Heart left ventricle (tissue), 16 donors: ENCODE measurements at regions of chr15 and their contacts with region 1.

Region 1: DNA sequence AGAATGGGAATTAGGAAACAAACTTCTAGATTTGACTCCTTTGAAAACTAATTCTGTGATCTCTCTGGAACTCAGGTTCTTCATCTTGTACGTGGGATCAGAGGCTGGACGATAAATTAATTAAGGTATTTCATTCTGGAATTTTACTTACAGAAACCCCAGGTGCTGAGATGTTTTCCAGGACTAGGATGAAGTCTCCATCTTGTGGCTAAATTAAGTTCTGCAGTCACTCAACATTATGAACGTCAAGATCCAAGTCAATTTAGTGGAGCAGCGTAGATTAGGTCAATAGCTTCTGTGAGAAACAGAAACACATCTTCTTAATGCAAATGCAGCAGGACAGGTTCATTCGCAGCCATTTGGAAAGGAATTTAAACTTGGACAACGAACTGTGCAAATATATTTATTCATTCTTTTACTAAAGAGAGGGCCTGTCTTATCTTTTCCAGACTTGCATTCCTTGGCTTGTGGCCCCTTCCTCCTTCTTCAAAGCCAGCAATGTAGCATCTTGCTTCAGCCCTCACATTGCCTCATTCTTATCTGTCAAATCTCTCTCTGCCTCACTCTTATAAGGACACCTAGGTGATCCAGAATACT is 26.7 kb upstream of the TMC3 start:
- DNase-seq: no peak
- ATAC-seq: no peak
- H3K4me3 ChIP-seq: no peak overlapping the region
- H3K27ac ChIP-seq: no peak overlapping the region
- H3K4me1 ChIP-seq: no peaks in the 10 kb centered on the region
- H3K27me3 ChIP-seq: no peaks in the 10 kb centered on the region
- CTCF ChIP-seq: peak; percentile 69 to 82 (median 73)
- POLR2A ChIP-seq: no peak

Region 2: GRCh38 chr15:81155375-81156218 is 245.1 kb before region 1 on chr15:
- intact Hi-C with region 1: loop called in 1 of 10 experiments (anchors 5 kb)
- DNase-seq: no peak
- ATAC-seq: peak in 2 of 4 donors; percentile 7 to 48
- H3K4me3 ChIP-seq: no peak overlapping the region
- H3K27ac ChIP-seq: no peak overlapping the region
- H3K4me1 ChIP-seq: peaks cover 0 to 24% (median 15%) of the 10 kb centered on the region in 12 donors
- H3K27me3 ChIP-seq: no peaks in the 10 kb centered on the region
- CTCF ChIP-seq: peak; percentile 29 to 78 (median 66)
- POLR2A ChIP-seq: no peak

Region 3: GRCh38 chr15:81229586-81229985 is 171.2 kb before region 1 on chr15:
- intact Hi-C with region 1: no loop called
- DNase-seq: peak in 3 of 5 donors; percentile 36 to 64 (median 59)
- ATAC-seq: peak; percentile 45 to 87 (median 74)
- H3K4me3 ChIP-seq: no peak overlapping the region
- H3K27ac ChIP-seq: peak overlapping the region in 8 of 12 donors; percentile 25 to 73 (median 45)
- H3K4me1 ChIP-seq: peaks cover 0 to 28% (median 6%) of the 10 kb centered on the region in 12 donors
- H3K27me3 ChIP-seq: no peaks in the 10 kb centered on the region
- CTCF ChIP-seq: no peak
- POLR2A ChIP-seq: no peak

Region 4: DNA sequence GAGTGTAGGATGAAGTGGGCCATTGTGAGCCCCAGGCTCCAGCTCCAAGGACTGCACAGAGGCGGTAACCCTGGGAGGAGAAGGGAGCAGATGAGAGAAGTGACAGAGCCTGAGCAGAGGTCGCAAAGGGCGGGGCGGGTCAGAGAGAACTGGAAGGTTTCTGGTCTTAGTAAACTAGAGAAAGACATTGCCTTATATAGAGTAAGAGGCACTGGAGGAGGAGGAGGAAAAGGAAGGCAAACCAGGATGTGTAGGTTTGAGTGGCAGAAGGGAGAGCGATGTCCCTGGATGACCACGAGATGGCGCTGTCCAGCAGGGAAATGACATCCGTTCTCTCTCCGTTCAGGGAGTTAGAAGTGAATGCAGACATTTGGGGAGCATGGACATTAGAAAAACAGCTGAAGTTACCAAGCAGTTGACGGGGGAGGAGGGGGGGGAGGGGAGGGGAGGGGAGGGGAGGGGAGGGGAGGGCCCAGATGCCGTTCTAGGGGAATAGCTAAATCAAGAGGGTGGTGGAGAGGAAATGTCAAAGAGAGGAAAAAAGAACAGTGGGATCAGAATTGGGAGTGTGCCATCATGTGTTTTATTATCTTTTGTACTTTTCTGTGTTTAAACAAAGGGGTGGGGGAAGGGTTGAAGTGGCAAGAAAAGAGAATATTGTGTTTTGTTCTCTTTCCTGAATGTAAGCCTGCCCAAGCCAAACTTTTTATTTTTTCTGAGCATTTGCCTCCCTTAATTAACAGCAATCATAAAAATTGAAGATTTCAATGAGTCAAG is 125.6 kb before region 1 on chr15:
- intact Hi-C with region 1: loop called (anchors 1 to 2 kb)
- DNase-seq: peak; percentile 74 to 83 (median 78)
- ATAC-seq: peak; percentile 62 to 94 (median 88)
- H3K4me3 ChIP-seq: no peak overlapping the region
- H3K27ac ChIP-seq: peak overlapping the region in 10 of 12 donors; percentile 12 to 70 (median 48)
- H3K4me1 ChIP-seq: peaks cover 0 to 16% (median 4%) of the 10 kb centered on the region in 12 donors
- H3K27me3 ChIP-seq: peaks cover 0 to 3% (median 0%) of the 10 kb centered on the region in 9 donors
- CTCF ChIP-seq: peak; percentile 65 to 90 (median 78)
- POLR2A ChIP-seq: no peak

Region 5: DNA sequence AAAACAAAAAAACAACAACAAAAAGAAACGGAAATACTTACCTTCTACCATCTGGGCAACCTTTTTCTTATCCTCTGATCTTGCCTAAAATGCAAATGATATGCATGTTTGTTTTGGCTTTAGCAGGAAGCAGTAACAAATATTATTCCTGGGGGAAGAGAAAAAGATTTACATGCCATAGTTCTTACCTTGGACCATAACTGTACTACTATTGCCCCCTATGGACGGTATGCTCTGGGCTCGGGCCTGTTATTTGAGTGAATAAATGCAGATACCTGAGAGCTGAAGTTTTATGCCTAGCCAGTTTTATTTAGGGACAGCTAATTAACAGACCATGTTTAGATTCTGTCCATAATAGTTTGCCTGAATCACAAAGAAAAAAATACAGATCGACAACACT is 64.2 kb before region 1 on chr15:
- intact Hi-C with region 1: loop called in 1 of 10 experiments (anchors 5 kb)
- DNase-seq: no peak
- ATAC-seq: no peak
- H3K4me3 ChIP-seq: no peak overlapping the region
- H3K27ac ChIP-seq: no peak overlapping the region
- H3K4me1 ChIP-seq: peaks cover 0 to 34% (median 7%) of the 10 kb centered on the region in 12 donors
- H3K27me3 ChIP-seq: no peaks in the 10 kb centered on the region
- CTCF ChIP-seq: peak in 8 of 12 donors; percentile 9 to 36 (median 18)
- POLR2A ChIP-seq: no peak

Region 6: DNA sequence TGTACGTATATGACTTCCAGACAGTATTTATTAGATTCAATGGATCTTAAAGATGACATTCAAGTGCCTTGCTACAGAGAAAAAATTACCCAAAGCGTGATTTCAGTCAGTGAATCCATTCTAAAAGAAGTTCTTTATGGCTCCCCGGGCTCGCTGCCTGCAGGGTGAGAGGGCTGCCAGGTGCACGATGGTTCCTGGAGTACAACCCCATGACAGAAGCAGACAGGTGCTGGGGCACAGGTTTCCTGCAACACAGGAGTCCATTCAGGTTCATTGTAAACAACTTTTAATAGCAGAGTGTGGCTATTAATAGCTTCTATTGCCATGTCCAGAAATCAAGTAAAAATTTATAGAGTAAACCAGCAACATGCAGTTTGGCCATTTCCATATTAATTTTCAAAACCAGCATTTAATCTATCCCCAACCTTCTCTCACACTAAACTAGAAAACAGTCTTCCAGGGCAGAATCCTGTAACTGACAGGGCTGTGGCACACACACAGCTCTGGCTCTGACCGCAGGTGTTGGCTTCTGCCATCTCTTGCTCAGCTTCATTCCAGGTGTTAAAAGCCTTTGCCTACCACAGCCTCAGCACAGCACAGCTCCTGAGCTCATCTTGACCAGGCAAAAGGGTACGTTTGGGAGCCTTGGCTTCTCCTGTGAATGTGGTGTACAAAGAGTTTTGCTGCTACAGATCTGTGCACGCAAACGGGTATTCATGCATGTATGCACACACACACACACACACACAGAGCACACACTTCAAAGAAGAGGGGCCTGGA is 459.2 kb after region 1 on chr15:
- intact Hi-C with region 1: no loop called
- DNase-seq: no peak
- ATAC-seq: no peak
- H3K4me3 ChIP-seq: no peak overlapping the region
- H3K27ac ChIP-seq: no peak overlapping the region
- H3K4me1 ChIP-seq: no peaks in the 10 kb centered on the region
- H3K27me3 ChIP-seq: no peaks in the 10 kb centered on the region
- CTCF ChIP-seq: no peak
- POLR2A ChIP-seq: no peak

Region 7: DNA sequence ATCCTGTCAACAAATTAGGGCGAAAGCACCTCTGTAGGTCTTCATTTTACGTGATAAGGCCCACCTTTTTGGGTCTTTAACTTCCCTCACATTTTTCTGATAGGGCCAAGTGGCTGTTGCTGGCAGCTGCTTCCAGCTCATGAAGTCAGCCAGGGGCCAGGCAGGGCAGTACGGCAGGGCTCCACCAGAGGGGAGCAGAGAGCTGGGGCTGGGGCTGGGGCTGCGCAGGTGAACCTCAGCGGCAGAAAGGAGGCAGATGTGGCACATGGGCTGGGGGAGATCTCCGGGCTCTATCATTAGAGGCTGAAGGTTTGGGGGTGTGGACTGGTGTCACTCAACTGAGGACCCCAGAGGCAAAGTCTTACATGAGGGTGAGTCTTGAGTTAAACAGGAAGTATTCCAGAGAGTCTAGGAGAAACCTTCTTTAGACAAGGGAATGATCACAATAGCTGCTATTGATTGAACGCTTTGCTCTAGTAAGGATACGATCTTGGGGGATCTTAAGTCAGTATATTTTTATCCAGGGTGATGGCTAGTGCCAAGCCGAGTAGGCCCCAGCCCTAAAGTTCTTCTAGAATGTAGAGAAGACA is 707.8 kb after region 1 on chr15:
- intact Hi-C with region 1: loop called in 1 of 10 experiments (anchors 10 kb)
- DNase-seq: peak; percentile 21 to 84 (median 55)
- ATAC-seq: peak; percentile 85 to 96 (median 91)
- H3K4me3 ChIP-seq: no peak overlapping the region
- H3K27ac ChIP-seq: no peak overlapping the region
- H3K4me1 ChIP-seq: no peaks in the 10 kb centered on the region
- H3K27me3 ChIP-seq: no peaks in the 10 kb centered on the region
- CTCF ChIP-seq: peak; percentile 57 to 83 (median 70)
- POLR2A ChIP-seq: no peak